ENCODE measurements at regions of chr12 and their contacts with region 1.

Region 1: GRCh38 chr12:53079226-53080117 is at the start of gene SPRYD3:
- DNase-seq: peak; percentile 96
- ATAC-seq: peak; percentile 95
- H3K4me3 ChIP-seq: peak within 1 kb of the TSS; percentile 80
- H3K27ac ChIP-seq: peak within 1 kb of the TSS; percentile 98
- H3K4me1 ChIP-seq: peaks cover 11% of the 10 kb centered on the region
- H3K27me3 ChIP-seq: no peaks in the 10 kb centered on the region
- CTCF ChIP-seq: no peak
- POLR2A ChIP-seq: peak; percentile 94
- RAD21 ChIP-seq: no peak
- total RNA-seq, gene SPRYD3: 21.7 and 25.6 TPM in 2 replicates

Region 2: DNA sequence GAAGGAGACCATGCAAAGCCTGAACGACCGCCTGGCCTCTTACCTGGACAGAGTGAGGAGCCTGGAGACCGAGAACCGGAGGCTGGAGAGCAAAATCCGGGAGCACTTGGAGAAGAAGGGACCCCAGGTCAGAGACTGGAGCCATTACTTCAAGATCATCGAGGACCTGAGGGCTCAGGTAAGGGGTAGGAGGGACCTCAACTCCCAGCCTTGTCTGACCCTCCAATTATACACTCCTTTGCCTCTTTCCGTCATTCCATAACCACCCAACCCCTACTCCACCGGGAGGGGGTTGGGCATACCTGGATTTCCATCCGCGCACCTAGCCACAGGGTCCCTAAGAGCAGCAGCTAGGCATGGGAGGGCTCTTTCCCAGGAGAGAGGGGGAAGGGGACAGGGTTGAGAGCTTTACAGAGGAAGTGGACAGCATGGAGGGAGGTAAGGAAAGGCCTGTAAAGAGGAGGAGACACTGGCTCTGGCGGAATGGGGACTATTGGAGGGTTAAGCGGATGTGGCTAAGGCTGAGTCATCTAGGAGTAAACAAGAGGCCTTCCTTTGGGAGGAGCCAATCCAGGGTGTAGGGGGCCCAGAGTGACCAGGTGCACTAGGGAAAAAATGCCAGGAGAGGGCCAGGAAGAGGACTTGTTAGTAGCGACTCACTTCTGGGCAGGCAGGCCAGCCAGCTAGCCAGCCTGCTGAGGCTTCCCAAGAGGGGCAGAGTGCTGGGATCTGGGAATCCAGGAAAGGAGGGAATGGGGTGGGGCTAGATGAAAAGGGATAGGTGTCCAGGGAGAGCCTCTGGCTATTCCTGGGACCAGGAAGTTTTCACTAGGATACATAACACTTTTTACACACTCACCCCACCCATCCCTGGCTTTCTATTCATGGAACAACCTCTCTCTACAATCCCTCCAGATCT is 129.8 kb before region 1 on chr12:
- CTCF ChIA-PET with region 1: no interaction called
- POLR2A ChIA-PET with region 1: no interaction called
- dilution Hi-C with region 1: no loop called
- in situ Hi-C with region 1: no loop called
- intact Hi-C with region 1: no loop called
- DNase-seq: peak; percentile 95
- ATAC-seq: peak; percentile 80
- H3K4me3 ChIP-seq: peak overlapping the region; percentile 78
- H3K27ac ChIP-seq: peak overlapping the region; percentile 86
- H3K4me1 ChIP-seq: peaks cover 20% of the 10 kb centered on the region
- H3K27me3 ChIP-seq: no peaks in the 10 kb centered on the region
- CTCF ChIP-seq: no peak
- POLR2A ChIP-seq: peak; percentile 65; the same call in 1 of the 2 replicates
- RAD21 ChIP-seq: 0 out of 2 replicates have a peak, but pooled peaks have one; percentile 8

Region 3: GRCh38 chr12:53065975-53066931 is 13.2 kb before region 1 on chr12:
- CTCF ChIA-PET with region 1: interaction called, 13 read pairs
- POLR2A ChIA-PET with region 1: interaction called, 7 read pairs
- dilution Hi-C with region 1: no loop called
- in situ Hi-C with region 1: no loop called
- intact Hi-C with region 1: no loop called
- DNase-seq: peak; percentile 81
- ATAC-seq: peak; percentile 70
- H3K4me3 ChIP-seq: no peak overlapping the region
- H3K27ac ChIP-seq: peak overlapping the region; percentile 45
- H3K4me1 ChIP-seq: peaks cover 32% of the 10 kb centered on the region
- H3K27me3 ChIP-seq: no peaks in the 10 kb centered on the region
- CTCF ChIP-seq: peak; percentile 94
- POLR2A ChIP-seq: no peak
- RAD21 ChIP-seq: peak; percentile 95

Region 4: DNA sequence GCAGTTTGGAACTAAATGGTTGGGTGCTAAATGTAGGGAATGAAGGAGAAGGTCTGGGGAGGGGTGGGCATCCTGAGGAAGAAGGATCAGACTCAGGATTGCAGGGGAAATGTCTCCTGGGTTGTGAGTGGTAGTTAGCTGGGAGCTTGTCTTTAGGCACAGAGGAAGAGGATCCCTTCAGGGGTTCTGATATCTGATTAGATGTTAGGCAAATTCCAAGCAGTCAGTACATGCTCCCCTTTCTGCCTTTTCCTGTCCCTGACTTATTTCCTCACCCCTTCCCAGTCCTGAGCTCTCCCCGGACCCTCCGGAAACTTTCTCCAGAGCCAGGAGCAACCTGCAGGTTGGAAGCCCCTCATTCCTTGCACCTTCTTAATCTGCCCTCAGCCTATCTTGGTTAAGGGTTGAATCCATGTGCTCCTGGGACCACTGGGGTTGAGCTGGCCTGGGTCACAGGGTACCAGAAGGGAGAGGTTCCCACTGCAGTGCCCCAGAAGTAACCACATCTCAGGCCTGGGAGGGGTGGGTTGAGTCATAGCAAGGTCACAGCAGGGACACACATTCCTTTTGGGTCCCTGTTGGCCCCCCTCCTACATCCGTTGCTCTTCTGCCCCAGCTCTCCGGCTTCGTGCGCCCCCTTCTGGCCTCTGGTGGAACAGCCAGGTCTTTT is 19.6 kb after region 1 on chr12:
- CTCF ChIA-PET with region 1: interaction called, 6 read pairs
- POLR2A ChIA-PET with region 1: interaction called, 8 read pairs
- dilution Hi-C with region 1: no loop called
- in situ Hi-C with region 1: no loop called
- intact Hi-C with region 1: loop called (anchors 1 kb)
- DNase-seq: peak; percentile 95
- ATAC-seq: peak; percentile 66
- H3K4me3 ChIP-seq: peak overlapping the region; percentile 60
- H3K27ac ChIP-seq: peak overlapping the region; percentile 94
- H3K4me1 ChIP-seq: peaks cover 31% of the 10 kb centered on the region
- H3K27me3 ChIP-seq: no peaks in the 10 kb centered on the region
- CTCF ChIP-seq: peak; percentile 97
- POLR2A ChIP-seq: 0 out of 2 replicates have a peak, but pooled peaks have one; percentile 41
- RAD21 ChIP-seq: peak; percentile 93

Region 5: DNA sequence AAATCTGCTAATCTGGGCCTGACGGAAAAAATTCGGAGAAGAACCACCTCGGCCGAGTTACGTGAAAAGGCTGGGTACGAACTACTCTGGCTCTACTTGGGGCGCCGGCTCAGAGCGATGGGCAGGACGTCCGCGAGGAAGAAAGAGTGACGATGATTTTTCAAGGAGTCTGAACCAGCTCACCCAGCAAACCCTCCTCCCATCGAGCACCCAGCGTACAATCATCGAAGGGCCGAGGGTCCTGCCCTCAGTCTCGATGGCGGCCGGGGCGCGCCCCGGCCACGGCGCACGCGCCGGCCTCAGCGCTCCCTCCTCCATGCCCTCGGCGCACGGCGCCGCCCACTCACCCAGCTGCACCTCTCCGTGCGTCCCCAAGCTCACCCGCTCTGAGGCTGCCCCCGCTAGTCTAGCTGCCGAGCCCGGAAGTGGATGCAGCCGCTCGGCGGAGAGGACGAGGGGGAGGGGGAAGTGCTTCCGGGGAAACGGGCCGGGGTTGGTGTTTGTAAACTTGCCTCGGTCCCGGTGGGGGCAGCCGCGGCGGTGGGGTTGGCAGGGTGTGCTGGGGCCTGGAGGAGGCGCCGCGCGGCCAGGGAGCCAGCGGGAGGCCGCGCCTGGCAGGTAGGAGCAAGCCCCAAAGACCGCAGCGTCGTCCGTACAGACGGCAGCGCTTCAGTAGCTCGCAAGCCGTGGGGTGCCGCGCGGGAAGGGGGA is 100.9 kb after region 1 on chr12 and contains the starts of genes CSAD and ZNF740:
- CTCF ChIA-PET with region 1: no interaction called
- POLR2A ChIA-PET with region 1: interaction called, 3 read pairs
- dilution Hi-C with region 1: no loop called
- in situ Hi-C with region 1: no loop called
- intact Hi-C with region 1: loop called (anchors 2 kb)
- DNase-seq: peak; percentile 97
- ATAC-seq: peak; percentile 95
- H3K4me3 ChIP-seq: peak within 1 kb of the TSS; percentile 75
- H3K27ac ChIP-seq: peak within 1 kb of the TSS; percentile 89
- H3K4me1 ChIP-seq: peaks cover 17% of the 10 kb centered on the region
- H3K27me3 ChIP-seq: no peaks in the 10 kb centered on the region
- CTCF ChIP-seq: no peak
- POLR2A ChIP-seq: peak; percentile 65; the same call in 1 of the 2 replicates
- RAD21 ChIP-seq: no peak
- total RNA-seq, gene CSAD: 5.0 and 5.4 TPM in 2 replicates
- total RNA-seq, gene ZNF740: 11.7 and 13.1 TPM in 2 replicates

Region 6: GRCh38 chr12:53508534-53509199 is 429.2 kb after region 1 on chr12:
- CTCF ChIA-PET with region 1: no interaction called
- POLR2A ChIA-PET with region 1: interaction called, 17 read pairs
- dilution Hi-C with region 1: no loop called
- in situ Hi-C with region 1: no loop called
- intact Hi-C with region 1: no loop called
- DNase-seq: peak; percentile 67
- ATAC-seq: peak; percentile 93
- H3K4me3 ChIP-seq: no peak overlapping the region
- H3K27ac ChIP-seq: no peak overlapping the region
- H3K4me1 ChIP-seq: no peaks in the 10 kb centered on the region
- H3K27me3 ChIP-seq: no peaks in the 10 kb centered on the region
- CTCF ChIP-seq: peak; percentile 94
- POLR2A ChIP-seq: peak; percentile 52; the same call in 1 of the 2 replicates
- RAD21 ChIP-seq: peak; percentile 95